WTC11 (cell line): ENCODE measurements at regions of chr6 and their contacts with region 1.

Region 1: GRCh38 chr6:56292505-56293181 is 45.3 kb upstream of the COL21A1 start:
- DNase-seq: peak; percentile 25
- ATAC-seq: peak; percentile 94
- H3K4me3 Mint-ChIP-seq: no peak overlapping the region
- H3K27ac Mint-ChIP-seq: no peak overlapping the region
- H3K4me1 Mint-ChIP-seq: peaks cover 3% of the 10 kb centered on the region
- H3K27me3 Mint-ChIP-seq: no peaks in the 10 kb centered on the region
- CTCF ChIP-seq: no peak; the same call in 1 of the 2 replicates

Region 2: GRCh38 chr6:55980627-55981211 is 311.9 kb before region 1 on chr6:
- CTCF ChIA-PET with region 1: interaction called, 17 read pairs
- POLR2A ChIA-PET with region 1: no interaction called
- DNase-seq: no peak
- ATAC-seq: peak; percentile 50; the same call in 1 of the 2 replicates
- H3K4me3 Mint-ChIP-seq: no peak overlapping the region
- H3K27ac Mint-ChIP-seq: no peak overlapping the region
- H3K4me1 Mint-ChIP-seq: peaks cover 23% of the 10 kb centered on the region
- H3K27me3 Mint-ChIP-seq: no peaks in the 10 kb centered on the region
- CTCF ChIP-seq: peak; percentile 56; the same call in 1 of the 2 replicates

Region 3: GRCh38 chr6:56047931-56048540 is 244.6 kb before region 1 on chr6:
- CTCF ChIA-PET with region 1: interaction called, 12 read pairs
- POLR2A ChIA-PET with region 1: no interaction called
- DNase-seq: no peak
- ATAC-seq: no peak
- H3K4me3 Mint-ChIP-seq: no peak overlapping the region
- H3K27ac Mint-ChIP-seq: no peak overlapping the region
- H3K4me1 Mint-ChIP-seq: peaks cover 3% of the 10 kb centered on the region
- H3K27me3 Mint-ChIP-seq: no peaks in the 10 kb centered on the region
- CTCF ChIP-seq: no peak

Region 4: GRCh38 chr6:56246881-56247653 is 45.6 kb before region 1 on chr6 and contains the start of gene COL21A1:
- CTCF ChIA-PET with region 1: interaction called, 13 read pairs
- POLR2A ChIA-PET with region 1: no interaction called
- DNase-seq: peak; percentile 91
- ATAC-seq: peak; percentile 92
- H3K4me3 Mint-ChIP-seq: peak within 1 kb of the TSS; percentile 93
- H3K27ac Mint-ChIP-seq: peak within 1 kb of the TSS; percentile 99
- H3K4me1 Mint-ChIP-seq: peaks cover 63% of the 10 kb centered on the region
- H3K27me3 Mint-ChIP-seq: no peaks in the 10 kb centered on the region; the same call in 1 of the 2 replicates
- CTCF ChIP-seq: no peak
- total RNA-seq, gene COL21A1: 4.4 to 5.5 TPM (median 4.4 TPM) in 3 replicates